ENCODE measurements at regions of chr4 and their contacts with region 1.

Region 1: DNA sequence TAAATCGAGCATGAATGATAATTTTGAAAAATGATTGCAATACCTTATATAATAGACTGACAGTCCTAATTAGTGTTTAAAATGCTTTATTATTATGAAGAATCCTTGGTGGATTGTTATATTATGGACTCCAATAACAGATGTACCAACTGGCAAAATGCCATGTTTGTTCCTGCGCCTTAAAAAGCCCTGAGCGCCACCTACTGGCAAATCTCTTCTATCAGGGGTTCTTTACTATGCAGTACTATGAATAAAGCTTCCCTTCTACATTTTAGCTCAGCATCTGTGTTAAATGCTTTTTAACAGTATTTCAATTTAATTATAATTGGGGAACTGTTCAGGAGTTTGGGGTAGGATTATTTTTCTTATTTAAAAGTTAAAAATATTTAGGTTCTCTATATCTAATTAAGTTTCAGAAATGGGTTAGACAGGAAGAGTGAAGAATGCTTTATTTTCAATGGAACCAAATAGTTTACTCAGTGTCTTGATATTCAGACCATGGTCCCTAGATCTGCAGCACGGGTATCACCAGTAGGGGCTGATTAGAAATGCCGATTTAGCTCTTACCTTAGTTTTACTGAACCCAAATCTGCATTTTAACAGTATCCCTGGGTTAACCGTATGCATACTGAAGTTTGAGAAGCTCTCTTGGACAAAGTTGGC is 20.1 kb downstream of the CFAP97 start:
- DNase-seq: peak in 7 of 10 donors; percentile 66 to 92 (median 81)

Region 2: DNA sequence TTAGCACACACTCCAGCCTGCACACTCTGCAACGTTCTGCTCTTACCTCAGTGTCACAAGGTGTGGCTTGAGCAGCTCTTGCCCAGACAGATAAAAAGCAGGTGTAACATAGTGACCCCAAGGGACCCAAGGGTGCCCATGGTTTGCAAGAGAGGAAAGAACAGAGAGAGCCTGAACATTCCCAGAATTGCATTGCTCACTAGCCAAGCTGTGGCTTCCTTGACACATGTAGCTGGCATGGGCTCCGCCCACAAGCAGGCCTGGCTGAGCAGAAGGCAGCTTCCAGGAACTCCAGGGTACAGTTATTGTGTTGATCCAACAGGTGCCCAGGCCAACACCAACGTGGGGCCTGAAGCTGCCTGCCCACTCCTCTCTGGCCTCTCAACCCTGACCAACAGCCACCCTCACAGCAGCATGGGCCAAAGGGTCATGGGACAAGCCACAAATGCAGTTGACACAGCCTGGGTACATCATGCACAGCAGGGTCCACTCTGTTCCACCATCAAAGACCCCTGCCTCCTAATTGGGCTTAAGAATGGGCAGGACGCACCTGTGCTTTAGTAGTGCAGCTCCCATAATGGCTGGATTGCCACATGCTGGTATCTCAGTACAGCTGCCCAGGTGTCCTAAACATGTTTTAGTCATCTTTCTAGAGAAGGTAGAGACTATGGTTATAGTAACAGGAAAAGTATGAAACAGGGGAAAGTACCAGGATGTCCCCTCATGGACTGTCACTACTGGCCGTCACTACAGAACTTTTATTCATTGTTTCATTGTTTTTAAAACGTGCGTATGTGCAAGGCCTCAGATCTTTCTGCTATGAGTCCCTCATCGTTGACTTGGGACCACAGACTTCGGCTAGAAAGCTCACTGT is 284.3 kb before region 1 on chr4:
- intact Hi-C with region 1: no loop called
- DNase-seq: peak in 1 of 10 donors; percentile 84

Region 3: DNA sequence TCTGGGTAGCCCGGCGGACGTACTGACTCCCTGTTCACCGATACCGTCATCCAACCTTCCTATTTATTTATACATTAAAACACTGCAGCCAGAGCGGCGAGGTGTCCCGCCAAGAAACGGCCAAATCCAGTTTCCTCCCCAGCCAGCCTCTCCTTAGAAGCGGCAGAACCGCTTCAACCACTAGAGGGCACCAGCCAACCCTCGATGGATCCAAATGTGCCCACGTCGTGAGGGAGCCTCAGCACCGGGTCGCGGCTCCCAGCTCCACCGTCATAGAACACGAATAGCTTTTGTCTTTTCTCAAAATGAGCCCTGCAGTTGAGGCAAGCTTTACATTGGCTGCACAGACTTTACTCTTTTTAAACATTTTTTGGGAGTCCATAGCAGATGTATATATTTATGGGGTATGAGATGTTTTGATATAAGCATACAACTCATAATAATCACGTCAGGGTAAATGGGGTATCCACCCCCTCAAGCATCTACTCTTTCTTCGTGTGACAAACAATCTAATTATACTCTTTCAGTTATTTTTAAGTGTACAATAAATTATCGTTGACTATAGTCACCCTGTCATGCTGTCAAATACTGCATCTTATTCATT is 178.4 kb before region 1 on chr4:
- intact Hi-C with region 1: loop called (anchors 5 kb)
- DNase-seq: peak; percentile 59 to 96 (median 83)

Region 4: GRCh38 chr4:185142912-185143595 is 40.7 kb before region 1 on chr4 and contains the start of gene SLC25A4:
- intact Hi-C with region 1: loop called (anchors 2 kb)
- DNase-seq: peak; percentile 83 to 99 (median 92)